ENCODE measurements at regions of chr13 and their contacts with region 1.

Region 1: DNA sequence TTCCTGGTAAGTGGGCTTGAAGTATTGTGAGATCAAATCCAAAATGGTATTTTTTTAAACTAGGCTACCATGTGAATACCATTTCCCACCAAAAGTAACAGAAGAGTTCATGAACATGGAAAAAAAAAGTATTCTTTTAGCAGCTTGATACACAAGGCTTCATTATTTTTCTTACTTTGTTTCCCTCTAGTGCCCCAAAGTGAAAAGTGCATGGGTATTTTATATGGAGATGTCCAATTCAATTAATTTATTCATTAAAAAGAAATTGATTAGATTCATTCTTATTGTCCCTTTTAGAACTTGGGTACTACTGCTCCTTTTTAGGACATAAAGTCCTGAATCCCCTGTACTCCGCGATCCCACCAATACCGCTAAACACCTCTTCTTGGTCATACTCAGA is 28.6 kb upstream of the SCEL start:
- DNase-seq: peak; percentile 31
- H3K4me3 ChIP-seq: no peak overlapping the region
- H3K27ac ChIP-seq: no peak overlapping the region
- H3K4me1 ChIP-seq: peaks cover 18% of the 10 kb centered on the region
- CTCF ChIP-seq: peak; percentile 80

Region 2: DNA sequence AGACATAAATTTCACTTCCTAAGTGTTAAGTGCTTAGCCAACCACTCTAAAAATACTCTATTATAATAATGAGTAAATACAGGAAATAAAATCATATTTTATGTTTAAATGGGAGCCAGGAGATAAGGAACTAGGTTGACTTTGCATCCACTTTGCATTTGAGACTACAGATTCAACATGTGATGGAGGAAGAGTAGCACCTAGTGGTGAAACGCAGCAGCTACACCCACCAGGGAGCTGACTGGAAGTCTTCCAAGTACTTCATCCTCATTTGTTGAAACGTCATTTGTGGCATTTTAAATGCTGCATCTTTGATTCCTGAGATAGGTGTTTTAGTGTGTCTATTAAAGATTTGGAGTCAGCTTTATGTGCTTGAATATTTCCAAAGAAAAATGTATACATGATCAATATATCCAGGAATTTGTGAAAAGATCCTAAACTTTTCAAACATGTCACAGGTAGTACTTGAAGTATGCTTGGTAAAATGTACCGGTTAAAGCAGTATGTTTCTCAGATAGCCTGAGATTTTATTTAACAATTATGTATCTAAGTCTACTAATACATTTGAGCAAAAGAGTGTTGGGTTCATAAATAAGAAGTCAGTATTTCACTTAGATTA is 603.2 kb before region 1 on chr13:
- CTCF ChIA-PET with region 1: no interaction called
- POLR2A ChIA-PET with region 1: no interaction called
- intact Hi-C with region 1: loop called (anchors 10 kb)
- DNase-seq: peak; percentile 63
- H3K4me3 ChIP-seq: no peak overlapping the region
- H3K27ac ChIP-seq: no peak overlapping the region
- H3K4me1 ChIP-seq: no peaks in the 10 kb centered on the region
- CTCF ChIP-seq: peak; percentile 99

Region 3: DNA sequence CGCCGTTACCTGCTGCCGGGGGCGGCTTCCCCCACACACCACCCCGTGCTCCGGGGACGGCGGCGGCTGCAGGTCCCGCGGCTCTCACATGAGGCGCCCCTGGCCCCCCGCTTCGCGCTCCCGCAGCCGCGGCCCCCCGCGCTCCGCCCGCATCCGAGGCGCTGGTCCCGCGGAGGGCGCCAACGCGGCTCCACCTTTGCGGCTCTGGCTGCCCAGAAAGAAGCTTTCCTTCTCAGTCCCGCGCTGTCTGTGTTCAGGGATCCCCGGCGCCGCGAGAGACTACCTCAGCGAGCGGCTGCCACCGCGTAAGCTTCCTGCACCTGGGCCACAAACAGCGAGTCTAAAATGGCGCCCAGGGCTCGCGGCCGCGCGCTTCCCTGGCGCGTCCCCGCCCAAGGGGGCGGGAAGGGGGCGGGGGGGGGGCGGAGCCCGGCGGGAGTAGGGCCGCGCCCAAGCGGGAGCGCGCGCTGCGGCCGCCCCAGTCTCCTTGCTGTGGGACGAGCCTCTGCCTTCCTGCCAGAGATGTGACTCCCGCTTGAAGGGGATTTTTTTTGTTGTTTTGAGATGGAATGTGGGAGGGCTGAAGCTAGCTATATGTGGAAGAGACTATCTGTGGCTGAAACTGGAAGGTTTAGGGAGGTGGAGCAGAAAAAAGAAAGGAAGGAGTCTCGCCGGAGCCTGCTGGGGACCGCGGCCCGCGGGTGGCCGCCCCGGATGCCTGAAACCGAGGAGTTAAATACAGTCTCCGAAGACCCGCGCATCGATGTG is 479.9 kb before region 1 on chr13 and contains the start of gene FBXL3:
- CTCF ChIA-PET with region 1: no interaction called
- POLR2A ChIA-PET with region 1: no interaction called
- intact Hi-C with region 1: loop called (anchors 5 kb)
- DNase-seq: peak; percentile 91
- H3K4me3 ChIP-seq: peak within 1 kb of the TSS; percentile 98
- H3K27ac ChIP-seq: peak within 1 kb of the TSS; percentile 91
- H3K4me1 ChIP-seq: peaks cover 36% of the 10 kb centered on the region
- CTCF ChIP-seq: no peak
- total RNA-seq, gene FBXL3: 21.6 and 23.4 TPM in 2 replicates

Region 4: GRCh38 chr13:77492982-77493381 is 13.9 kb before region 1 on chr13:
- CTCF ChIA-PET with region 1: interaction called, 4 read pairs
- POLR2A ChIA-PET with region 1: interaction called, 20 read pairs
- intact Hi-C with region 1: no loop called
- DNase-seq: peak; percentile 30
- H3K4me3 ChIP-seq: no peak overlapping the region
- H3K27ac ChIP-seq: no peak overlapping the region
- H3K4me1 ChIP-seq: no peaks in the 10 kb centered on the region
- CTCF ChIP-seq: peak; percentile 75

Measured in OCI-LY7 (cell line).